ENCODE measurements at regions of chr11 and their contacts with region 1.

Region 1: GRCh38 chr11:61129639-61130523 is 27.6 kb downstream of the CD5 start:
- DNase-seq: peak; percentile 90
- ATAC-seq: peak; percentile 100
- H3K4me3 ChIP-seq: no peak overlapping the region
- H3K4me3 Mint-ChIP-seq: no peak overlapping the region
- H3K27ac ChIP-seq: no peak overlapping the region
- H3K27ac Mint-ChIP-seq: no peak overlapping the region
- H3K4me1 ChIP-seq: peaks cover 9% of the 10 kb centered on the region in 2 donors
- H3K4me1 Mint-ChIP-seq: peaks cover 4% of the 10 kb centered on the region
- H3K27me3 ChIP-seq: no peaks in the 10 kb centered on the region
- H3K27me3 Mint-ChIP-seq: no peaks in the 10 kb centered on the region
- CTCF ChIP-seq: peak; percentile 100

Region 2: GRCh38 chr11:60528934-60529333 is 600.9 kb before region 1 on chr11:
- CTCF ChIA-PET with region 1: no interaction called
- POLR2A ChIA-PET with region 1: no interaction called
- intact Hi-C with region 1: no loop called
- DNase-seq: peak; percentile 75
- ATAC-seq: peak; percentile 87
- H3K4me3 ChIP-seq: no peak overlapping the region
- H3K4me3 Mint-ChIP-seq: no peak overlapping the region
- H3K27ac ChIP-seq: no peak overlapping the region
- H3K27ac Mint-ChIP-seq: peak overlapping the region; percentile 53
- H3K4me1 ChIP-seq: peaks cover 4 to 9% of the 10 kb centered on the region in 2 donors
- H3K4me1 Mint-ChIP-seq: peaks cover 15% of the 10 kb centered on the region
- H3K27me3 ChIP-seq: no peaks in the 10 kb centered on the region
- H3K27me3 Mint-ChIP-seq: no peaks in the 10 kb centered on the region
- CTCF ChIP-seq: no peak

Region 3: DNA sequence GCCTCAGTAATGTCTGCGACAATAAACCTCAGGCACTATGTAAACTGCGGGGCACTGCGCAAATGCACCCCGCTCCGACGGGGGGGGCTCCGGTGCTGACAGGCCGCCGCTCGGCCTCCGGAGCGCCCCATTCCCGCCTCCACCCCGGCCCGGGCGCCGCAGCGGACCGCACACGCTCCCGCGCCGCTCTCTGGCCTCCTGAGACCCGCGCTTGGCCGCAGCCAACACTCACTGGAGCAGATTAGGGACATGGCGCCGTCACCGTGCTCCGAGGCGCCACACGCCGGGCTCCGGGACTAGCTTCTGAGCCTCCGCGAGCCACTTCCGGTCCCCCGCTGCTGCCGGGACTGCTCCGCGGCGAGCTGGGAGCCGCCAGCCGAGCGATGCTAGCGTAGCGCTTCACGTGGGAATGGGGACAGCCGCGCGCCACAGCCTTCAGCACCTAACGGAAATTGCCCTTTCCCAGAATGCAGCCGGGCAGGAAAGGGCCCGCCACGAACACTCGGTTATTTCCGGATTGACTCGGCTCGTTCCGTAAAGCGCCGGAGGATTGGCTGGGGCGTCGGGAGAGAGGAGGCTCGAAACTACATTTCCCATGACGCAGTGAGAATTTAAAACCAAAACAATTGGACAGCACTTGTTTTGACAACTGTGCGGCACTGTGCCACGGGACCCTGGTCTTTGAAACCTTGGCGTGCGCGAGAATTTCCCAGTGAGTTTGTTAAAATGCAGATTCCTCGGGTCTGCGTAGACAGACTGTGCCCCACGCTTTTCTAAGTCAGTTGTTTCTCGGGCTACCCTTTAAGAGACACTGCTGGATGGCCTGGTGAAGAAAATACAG is 223.5 kb before region 1 on chr11 and contains the start of gene PRPF19:
- CTCF ChIA-PET with region 1: interaction called, 10 read pairs
- POLR2A ChIA-PET with region 1: no interaction called
- intact Hi-C with region 1: no loop called
- DNase-seq: peak; percentile 98
- ATAC-seq: peak; percentile 89
- H3K4me3 ChIP-seq: peak within 1 kb of the TSS; percentile 72 to 98 (median 81)
- H3K4me3 Mint-ChIP-seq: peak within 1 kb of the TSS; percentile 92
- H3K27ac ChIP-seq: peak within 1 kb of the TSS; percentile 80 to 83
- H3K27ac Mint-ChIP-seq: peak within 1 kb of the TSS; percentile 97
- H3K4me1 ChIP-seq: peaks cover 47 to 51% of the 10 kb centered on the region in 2 donors
- H3K4me1 Mint-ChIP-seq: peaks cover 65% of the 10 kb centered on the region
- H3K27me3 ChIP-seq: no peaks in the 10 kb centered on the region
- H3K27me3 Mint-ChIP-seq: no peaks in the 10 kb centered on the region
- CTCF ChIP-seq: no peak
- total RNA-seq, gene PRPF19: 80.4 and 89.9 TPM in 2 replicates

Region 4: DNA sequence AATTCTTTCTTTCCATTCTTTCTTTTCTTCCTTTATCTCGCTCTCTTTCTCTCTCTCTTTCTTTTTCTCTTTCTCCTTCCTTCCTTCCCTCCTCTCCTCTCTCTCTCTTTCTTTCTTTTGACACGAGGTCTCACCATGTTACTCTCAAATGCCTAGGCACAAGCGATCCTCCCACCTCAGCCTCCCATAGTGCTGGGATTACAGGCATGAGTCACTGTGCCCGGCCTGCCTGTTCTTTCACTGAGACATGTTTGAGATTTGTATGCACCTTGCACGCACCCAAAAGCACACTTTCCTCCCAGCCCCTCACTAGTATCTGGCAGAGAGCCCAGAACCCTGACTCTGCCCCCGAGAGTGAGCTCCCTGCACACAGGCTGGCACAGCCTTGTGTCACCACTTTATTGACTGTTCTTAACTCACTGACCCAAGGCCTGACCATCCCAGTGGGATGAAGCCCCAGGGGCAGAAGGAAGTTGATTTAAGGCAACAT is 101.6 kb before region 1 on chr11:
- CTCF ChIA-PET with region 1: interaction called, 3 read pairs
- POLR2A ChIA-PET with region 1: interaction called, 13 read pairs
- intact Hi-C with region 1: loop called (anchors 10 kb)
- DNase-seq: peak; percentile 62
- ATAC-seq: peak; percentile 88
- H3K4me3 ChIP-seq: no peak overlapping the region
- H3K4me3 Mint-ChIP-seq: peak overlapping the region; percentile 67
- H3K27ac ChIP-seq: no peak overlapping the region
- H3K27ac Mint-ChIP-seq: peak overlapping the region; percentile 76
- H3K4me1 ChIP-seq: peaks cover 40 to 45% of the 10 kb centered on the region in 2 donors
- H3K4me1 Mint-ChIP-seq: peaks cover 48% of the 10 kb centered on the region
- H3K27me3 ChIP-seq: no peaks in the 10 kb centered on the region
- H3K27me3 Mint-ChIP-seq: no peaks in the 10 kb centered on the region
- CTCF ChIP-seq: no peak

Region 5: GRCh38 chr11:61041755-61042518 is 87.9 kb before region 1 on chr11:
- CTCF ChIA-PET with region 1: interaction called, 13 read pairs
- POLR2A ChIA-PET with region 1: no interaction called
- intact Hi-C with region 1: no loop called
- DNase-seq: peak; percentile 63
- ATAC-seq: peak; percentile 91
- H3K4me3 ChIP-seq: peak overlapping the region in 4 of 5 experiments; percentile 13 to 49 (median 34)
- H3K4me3 Mint-ChIP-seq: peak overlapping the region; percentile 88
- H3K27ac ChIP-seq: peak overlapping the region; percentile 84 to 87
- H3K27ac Mint-ChIP-seq: peak overlapping the region; percentile 95
- H3K4me1 ChIP-seq: peaks cover 15 to 17% of the 10 kb centered on the region in 2 donors
- H3K4me1 Mint-ChIP-seq: peaks cover 29% of the 10 kb centered on the region
- H3K27me3 ChIP-seq: no peaks in the 10 kb centered on the region
- H3K27me3 Mint-ChIP-seq: no peaks in the 10 kb centered on the region
- CTCF ChIP-seq: no peak

Region 6: DNA sequence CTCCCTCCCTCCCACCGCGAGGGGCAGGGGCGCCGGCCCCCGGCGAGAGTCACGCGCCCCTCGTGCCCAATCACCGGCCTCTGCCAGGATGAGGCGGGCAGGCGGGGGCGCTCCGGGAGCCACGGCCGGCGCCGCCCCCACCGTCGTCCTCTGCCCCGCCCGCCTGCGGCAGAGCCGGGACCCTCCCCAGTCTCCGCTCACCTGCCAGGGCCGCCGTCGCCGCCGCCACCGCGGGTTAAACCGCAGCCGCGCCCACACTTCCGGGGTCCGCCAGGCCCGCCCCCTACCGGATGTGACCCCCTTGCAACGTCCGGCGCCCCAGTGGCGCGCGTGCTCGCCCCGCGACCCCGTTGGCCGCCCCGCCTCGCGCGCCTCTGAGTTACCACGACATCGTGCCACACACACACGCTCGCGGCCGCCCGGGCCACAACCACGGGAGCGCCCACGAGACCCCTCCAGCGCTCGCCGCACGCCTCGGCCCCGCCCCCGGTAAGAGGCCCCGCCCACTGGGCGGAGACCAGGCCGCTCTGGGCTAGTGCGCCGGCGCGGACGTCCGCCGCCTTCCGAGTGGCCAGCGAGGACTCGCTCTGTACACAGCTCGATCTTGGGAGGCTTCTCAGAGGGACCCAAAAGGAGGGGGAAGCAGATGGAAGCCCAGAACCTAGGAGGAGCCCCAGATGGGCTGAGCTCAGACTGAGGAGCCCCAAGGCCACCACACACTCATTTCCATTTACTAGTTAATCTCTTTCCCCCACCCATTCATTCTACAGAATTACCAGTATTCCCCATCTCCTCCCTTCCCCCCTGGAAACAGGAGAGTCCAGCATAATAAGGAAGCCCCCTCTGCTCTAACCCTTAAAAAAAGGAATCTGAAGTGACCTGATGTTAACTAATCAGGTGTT is 31.6 kb after region 1 on chr11 and contains the start of gene VPS37C:
- CTCF ChIA-PET with region 1: interaction called, 13 read pairs
- POLR2A ChIA-PET with region 1: no interaction called
- intact Hi-C with region 1: no loop called
- DNase-seq: peak; percentile 98
- ATAC-seq: peak; percentile 75
- H3K4me3 ChIP-seq: peak within 1 kb of the TSS; percentile 32 to 68 (median 60)
- H3K4me3 Mint-ChIP-seq: peak within 1 kb of the TSS; percentile 91
- H3K27ac ChIP-seq: peak within 1 kb of the TSS; percentile 94 to 95
- H3K27ac Mint-ChIP-seq: peak within 1 kb of the TSS; percentile 96
- H3K4me1 ChIP-seq: peaks cover 42 to 50% of the 10 kb centered on the region in 2 donors
- H3K4me1 Mint-ChIP-seq: peaks cover 54% of the 10 kb centered on the region
- H3K27me3 ChIP-seq: no peaks in the 10 kb centered on the region
- H3K27me3 Mint-ChIP-seq: no peaks in the 10 kb centered on the region
- CTCF ChIP-seq: no peak
- total RNA-seq, gene VPS37C: 18.4 and 20.1 TPM in 2 replicates

Region 7: DNA sequence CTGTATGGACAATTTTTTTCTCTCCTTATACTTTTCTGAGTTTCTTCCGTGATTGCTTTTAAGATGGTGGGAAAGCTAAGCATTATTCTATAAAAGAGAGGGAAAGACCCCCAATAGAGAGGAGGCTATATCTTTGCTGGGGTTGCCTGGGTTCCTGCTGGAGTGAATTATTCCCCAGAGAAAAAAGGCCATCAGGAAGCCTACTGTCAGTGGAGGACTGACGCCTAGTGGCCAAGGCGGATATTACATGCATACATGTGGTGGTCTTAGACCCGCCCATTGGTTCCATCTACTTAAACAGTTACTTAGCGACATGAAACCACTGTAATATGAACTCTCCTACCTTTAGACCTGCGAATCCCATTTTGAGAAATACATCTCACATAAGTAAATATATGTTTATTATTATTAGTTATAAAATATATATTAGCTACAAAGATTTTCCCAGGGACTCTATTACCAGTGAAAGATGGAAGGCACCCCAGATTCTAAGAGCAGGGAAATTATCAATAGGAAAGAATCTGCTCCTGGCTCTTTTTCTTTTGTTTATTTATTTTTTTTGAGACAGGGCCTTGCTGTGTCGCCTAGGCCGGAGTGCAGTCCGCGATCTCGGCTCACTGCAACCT is 57.7 kb after region 1 on chr11:
- CTCF ChIA-PET with region 1: interaction called, 10 read pairs
- POLR2A ChIA-PET with region 1: no interaction called
- intact Hi-C with region 1: loop called (anchors 1 kb)
- DNase-seq: peak; percentile 89
- ATAC-seq: peak; percentile 98
- H3K4me3 ChIP-seq: no peak overlapping the region
- H3K4me3 Mint-ChIP-seq: no peak overlapping the region
- H3K27ac ChIP-seq: no peak overlapping the region
- H3K27ac Mint-ChIP-seq: no peak overlapping the region
- H3K4me1 ChIP-seq: no peaks in the 10 kb centered on the region
- H3K4me1 Mint-ChIP-seq: peaks cover 3% of the 10 kb centered on the region
- H3K27me3 ChIP-seq: no peaks in the 10 kb centered on the region
- H3K27me3 Mint-ChIP-seq: peaks cover 5% of the 10 kb centered on the region
- CTCF ChIP-seq: peak; percentile 99

Region 8: GRCh38 chr11:61198361-61198760 is 68.5 kb after region 1 on chr11:
- CTCF ChIA-PET with region 1: no interaction called
- POLR2A ChIA-PET with region 1: no interaction called
- intact Hi-C with region 1: no loop called
- DNase-seq: no peak
- ATAC-seq: no peak
- H3K4me3 ChIP-seq: no peak overlapping the region
- H3K4me3 Mint-ChIP-seq: no peak overlapping the region
- H3K27ac ChIP-seq: no peak overlapping the region
- H3K27ac Mint-ChIP-seq: no peak overlapping the region
- H3K4me1 ChIP-seq: no peaks in the 10 kb centered on the region
- H3K4me1 Mint-ChIP-seq: no peaks in the 10 kb centered on the region
- H3K27me3 ChIP-seq: peaks cover 0 to 3% (median 0%) of the 10 kb centered on the region in 4 experiments
- H3K27me3 Mint-ChIP-seq: peaks cover 35% of the 10 kb centered on the region
- CTCF ChIP-seq: no peak

Measured in B cell (primary cell).